B cell (primary cell): ENCODE measurements at regions of chr5 and their contacts with region 1.

Region 1: GRCh38 chr5:43484106-43484849 is 613 bp upstream of the TMEM267 start:
- DNase-seq: peak; percentile 93
- ATAC-seq: peak; percentile 68
- H3K4me3 ChIP-seq: peak overlapping the region; percentile 58 to 92 (median 89)
- H3K4me3 Mint-ChIP-seq: peak overlapping the region; percentile 100
- H3K27ac ChIP-seq: peak overlapping the region; percentile 94 to 99
- H3K27ac Mint-ChIP-seq: peak overlapping the region; percentile 100
- H3K4me1 ChIP-seq: peaks cover 22 to 23% of the 10 kb centered on the region in 2 donors
- H3K4me1 Mint-ChIP-seq: peaks cover 33% of the 10 kb centered on the region
- H3K27me3 ChIP-seq: no peaks in the 10 kb centered on the region
- H3K27me3 Mint-ChIP-seq: no peaks in the 10 kb centered on the region
- CTCF ChIP-seq: peak; percentile 81

Region 2: DNA sequence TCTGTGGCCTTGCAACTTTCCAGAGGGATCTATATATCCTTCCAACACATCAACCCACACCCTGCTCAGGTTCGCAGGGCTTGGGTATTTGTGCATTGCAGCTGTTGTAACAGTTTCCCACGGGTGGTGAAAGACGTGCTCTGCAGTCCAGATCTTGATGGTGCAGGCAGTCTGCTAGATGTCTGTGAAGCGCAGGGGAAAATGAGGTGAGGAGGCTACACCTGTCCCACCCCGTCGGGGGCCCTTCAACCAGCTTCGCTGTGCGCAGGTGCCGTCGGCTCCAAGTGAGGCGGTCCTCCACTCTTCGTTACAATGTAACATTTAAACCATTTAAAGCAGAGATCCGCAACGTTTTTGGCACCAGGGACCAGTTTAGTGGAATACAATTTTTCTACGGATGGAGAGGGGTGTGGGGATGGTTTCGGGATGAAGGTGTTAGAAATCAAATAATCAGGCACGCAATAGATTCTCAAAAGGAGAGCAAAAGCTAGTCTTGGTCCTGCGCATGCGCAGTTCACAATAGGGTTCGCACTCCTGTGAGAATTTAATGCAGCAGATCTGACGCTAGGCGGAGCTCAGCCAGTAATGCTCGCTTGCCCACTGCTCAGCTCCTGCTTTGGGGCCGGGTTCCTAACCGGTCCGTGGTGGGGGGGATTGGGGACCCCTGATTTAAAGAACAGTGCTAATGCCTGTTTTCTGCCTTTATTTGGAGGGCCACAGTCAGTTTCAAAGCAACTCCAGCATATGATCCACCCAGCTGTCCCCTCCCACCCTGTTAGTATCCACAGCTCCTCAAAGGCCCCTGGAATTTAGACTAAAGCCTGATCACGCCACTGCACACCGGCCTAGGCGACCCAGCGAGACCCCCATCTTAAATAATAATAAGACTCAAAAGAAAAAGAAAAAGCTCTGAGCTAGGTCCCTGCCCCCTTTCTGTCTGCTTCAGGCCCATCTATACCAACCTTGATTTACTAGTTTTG is 575.5 kb before region 1 on chr5:
- CTCF ChIA-PET with region 1: interaction called, 8 read pairs
- POLR2A ChIA-PET with region 1: interaction called, 4 read pairs
- intact Hi-C with region 1: loop called (anchors 1 kb)
- DNase-seq: peak; percentile 93
- ATAC-seq: peak; percentile 96
- H3K4me3 ChIP-seq: peak overlapping the region; percentile 52 to 88 (median 72)
- H3K4me3 Mint-ChIP-seq: peak overlapping the region; percentile 98
- H3K27ac ChIP-seq: peak overlapping the region in 1 of 2 donors; percentile 6
- H3K27ac Mint-ChIP-seq: peak overlapping the region; percentile 93
- H3K4me1 ChIP-seq: peaks cover 5 to 9% of the 10 kb centered on the region in 2 donors
- H3K4me1 Mint-ChIP-seq: peaks cover 10% of the 10 kb centered on the region
- H3K27me3 ChIP-seq: peaks cover 0 to 7% (median 2%) of the 10 kb centered on the region in 4 experiments
- H3K27me3 Mint-ChIP-seq: peaks cover 21% of the 10 kb centered on the region
- CTCF ChIP-seq: peak; percentile 88

Region 3: DNA sequence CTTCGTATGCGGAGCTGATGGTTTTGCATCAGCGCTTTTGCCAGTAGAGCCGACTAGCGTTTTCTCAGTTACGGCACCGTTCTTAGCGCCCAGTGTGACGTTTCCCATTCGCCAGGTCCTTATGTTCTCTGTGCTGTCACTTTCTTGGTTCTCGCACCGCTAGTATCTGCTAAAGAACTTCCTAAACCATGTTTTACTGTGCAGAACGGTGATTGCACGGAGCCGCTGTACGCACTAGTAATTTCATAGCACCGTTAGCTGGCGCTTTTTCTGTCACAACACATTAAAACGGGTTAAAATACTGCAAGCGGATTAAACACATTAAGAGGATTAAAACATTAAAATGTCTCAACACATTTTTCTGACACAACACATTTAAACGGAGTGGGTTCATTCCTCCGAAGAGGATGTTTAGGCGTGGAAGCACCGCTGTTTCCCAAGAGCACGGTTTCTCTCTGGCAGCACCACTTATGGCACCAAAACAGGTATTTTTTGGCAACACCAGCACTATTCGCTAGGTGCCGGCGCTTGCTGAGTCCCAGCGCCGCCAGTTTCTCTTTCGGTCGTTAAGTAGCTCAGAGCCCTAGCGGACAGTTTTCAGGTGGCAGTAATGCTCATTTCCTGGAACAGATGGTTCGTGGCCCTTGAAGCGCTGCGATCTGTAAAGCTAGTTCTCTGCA is 464.5 kb before region 1 on chr5:
- CTCF ChIA-PET with region 1: no interaction called
- POLR2A ChIA-PET with region 1: interaction called, 29 read pairs
- intact Hi-C with region 1: no loop called
- DNase-seq: peak; percentile 94
- ATAC-seq: peak; percentile 63
- H3K4me3 ChIP-seq: peak overlapping the region; percentile 63 to 99 (median 80)
- H3K4me3 Mint-ChIP-seq: peak overlapping the region; percentile 99
- H3K27ac ChIP-seq: peak overlapping the region; percentile 96 to 98
- H3K27ac Mint-ChIP-seq: peak overlapping the region; percentile 100
- H3K4me1 ChIP-seq: peaks cover 25 to 32% of the 10 kb centered on the region in 2 donors
- H3K4me1 Mint-ChIP-seq: peaks cover 42% of the 10 kb centered on the region
- H3K27me3 ChIP-seq: no peaks in the 10 kb centered on the region
- H3K27me3 Mint-ChIP-seq: no peaks in the 10 kb centered on the region
- CTCF ChIP-seq: peak; percentile 77

Region 4: GRCh38 chr5:43105369-43106289 is 378.6 kb before region 1 on chr5:
- CTCF ChIA-PET with region 1: interaction called, 9 read pairs
- POLR2A ChIA-PET with region 1: no interaction called
- intact Hi-C with region 1: loop called (anchors 1 kb)
- DNase-seq: peak; percentile 94
- ATAC-seq: peak; percentile 97
- H3K4me3 ChIP-seq: peak overlapping the region; percentile 58 to 85 (median 66)
- H3K4me3 Mint-ChIP-seq: peak overlapping the region; percentile 90
- H3K27ac ChIP-seq: peak overlapping the region; percentile 49 to 71
- H3K27ac Mint-ChIP-seq: peak overlapping the region; percentile 83
- H3K4me1 ChIP-seq: peaks cover 0 to 12% of the 10 kb centered on the region in 2 donors
- H3K4me1 Mint-ChIP-seq: peaks cover 11% of the 10 kb centered on the region
- H3K27me3 ChIP-seq: no peaks in the 10 kb centered on the region
- H3K27me3 Mint-ChIP-seq: no peaks in the 10 kb centered on the region
- CTCF ChIP-seq: peak; percentile 100

Region 5: GRCh38 chr5:43514816-43515677 is 30.8 kb after region 1 on chr5 and contains the start of gene C5orf34:
- CTCF ChIA-PET with region 1: interaction called, 17 read pairs
- POLR2A ChIA-PET with region 1: interaction called, 30 read pairs
- intact Hi-C with region 1: loop called (anchors 1 kb)
- DNase-seq: peak; percentile 93
- ATAC-seq: peak; percentile 99
- H3K4me3 ChIP-seq: peak within 1 kb of the TSS; percentile 78 to 93 (median 88)
- H3K4me3 Mint-ChIP-seq: peak within 1 kb of the TSS; percentile 94
- H3K27ac ChIP-seq: peak within 1 kb of the TSS; percentile 85 to 93
- H3K27ac Mint-ChIP-seq: peak within 1 kb of the TSS; percentile 88
- H3K4me1 ChIP-seq: peaks cover 12 to 18% of the 10 kb centered on the region in 2 donors
- H3K4me1 Mint-ChIP-seq: peaks cover 23% of the 10 kb centered on the region
- H3K27me3 ChIP-seq: no peaks in the 10 kb centered on the region
- H3K27me3 Mint-ChIP-seq: no peaks in the 10 kb centered on the region
- CTCF ChIP-seq: no peak
- total RNA-seq, gene C5orf34: 5.1 and 5.5 TPM in 2 replicates

Region 6: GRCh38 chr5:43815504-43815903 is 331.2 kb after region 1 on chr5:
- CTCF ChIA-PET with region 1: no interaction called
- POLR2A ChIA-PET with region 1: no interaction called
- intact Hi-C with region 1: no loop called
- DNase-seq: no peak
- ATAC-seq: no peak
- H3K4me3 ChIP-seq: no peak overlapping the region
- H3K4me3 Mint-ChIP-seq: no peak overlapping the region
- H3K27ac ChIP-seq: no peak overlapping the region
- H3K27ac Mint-ChIP-seq: no peak overlapping the region
- H3K4me1 ChIP-seq: no peaks in the 10 kb centered on the region
- H3K4me1 Mint-ChIP-seq: no peaks in the 10 kb centered on the region
- H3K27me3 ChIP-seq: no peaks in the 10 kb centered on the region
- H3K27me3 Mint-ChIP-seq: no peaks in the 10 kb centered on the region
- CTCF ChIP-seq: no peak